Ascending aorta (tissue), 2 donors: ENCODE measurements at regions of chr21 and their contacts with region 1.

Region 1: DNA sequence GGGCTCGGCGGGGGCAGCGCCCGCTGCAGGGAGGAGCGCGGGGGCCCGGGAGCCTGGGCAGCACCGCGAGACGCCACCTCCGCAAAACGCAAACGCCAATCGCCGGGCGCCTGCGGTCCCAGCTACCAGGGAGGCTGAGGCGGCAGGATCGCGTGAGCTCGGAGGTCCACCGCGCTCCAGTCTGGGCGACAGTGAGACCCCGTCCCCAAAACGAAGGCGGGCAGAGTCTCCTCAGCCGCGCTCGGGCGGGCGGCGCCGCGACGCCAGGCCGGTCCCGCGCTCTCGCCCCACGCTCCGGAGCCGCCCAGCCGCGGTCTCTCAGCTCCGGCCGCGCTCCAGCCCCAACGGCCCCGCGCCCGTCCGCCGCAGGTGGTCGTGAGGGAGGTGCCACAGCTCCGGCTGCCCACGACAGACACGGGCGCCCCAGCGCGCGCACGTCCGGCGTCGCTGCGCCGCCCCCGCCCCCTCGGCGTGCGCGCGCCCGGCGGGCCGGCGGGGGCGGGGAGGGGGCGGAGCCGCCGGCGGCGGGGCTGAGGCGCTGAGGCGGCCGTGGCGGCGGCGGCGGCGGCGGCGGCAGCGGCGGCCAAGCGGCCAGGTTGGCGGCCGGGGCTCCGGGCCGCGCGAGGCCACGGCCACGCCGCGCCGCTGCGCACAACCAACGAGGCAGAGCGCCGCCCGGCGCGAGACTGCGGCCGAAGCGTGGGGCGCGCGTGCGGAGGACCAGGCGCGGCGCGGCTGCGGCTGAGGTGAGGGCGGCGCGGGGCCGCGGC is at the start of gene ADARB1:
- DNase-seq: peak in 1 of 2 donors; percentile 74
- H3K4me3 ChIP-seq: peak within 1 kb of the TSS; percentile 81 to 98
- H3K27ac ChIP-seq: peak within 1 kb of the TSS; percentile 91
- H3K4me1 ChIP-seq: peaks cover 1 to 21% of the 10 kb centered on the region in 2 donors
- H3K27me3 ChIP-seq: no peaks in the 10 kb centered on the region
- CTCF ChIP-seq: no peak
- total RNA-seq, gene ADARB1: 82.9 TPM

Region 2: DNA sequence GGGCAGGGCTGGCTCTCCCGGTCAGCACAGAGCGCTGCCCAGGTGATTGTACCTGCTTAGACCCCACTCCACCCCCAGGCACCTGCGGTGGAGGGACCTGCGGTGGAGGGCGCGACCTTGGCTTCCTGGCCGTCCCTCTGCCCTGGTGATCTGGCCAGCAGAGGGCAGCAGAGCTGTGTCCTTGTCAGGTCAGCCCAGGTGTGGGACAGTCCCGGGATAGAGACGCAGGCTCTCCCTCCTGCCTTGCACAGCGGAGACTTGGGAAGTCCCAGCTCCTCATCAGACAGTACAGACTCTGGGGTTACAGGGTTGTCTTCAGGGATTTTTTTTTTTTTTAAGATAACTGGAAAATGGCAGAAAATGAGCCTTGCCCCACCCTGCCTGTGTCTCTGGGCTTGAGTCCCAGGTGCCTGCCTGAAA is 124.4 kb before region 1 on chr21:
- intact Hi-C with region 1: loop called (anchors 1 kb)
- DNase-seq: peak; percentile 50 to 94
- H3K4me3 ChIP-seq: peak overlapping the region in 1 of 2 donors; percentile 10
- H3K27ac ChIP-seq: peak overlapping the region; percentile 82 to 96
- H3K4me1 ChIP-seq: peaks cover 23 to 40% of the 10 kb centered on the region in 2 donors
- H3K27me3 ChIP-seq: no peaks in the 10 kb centered on the region
- CTCF ChIP-seq: peak; percentile 96 to 98 (median 97)

Region 3: GRCh38 chr21:45000977-45001728 is 73.1 kb before region 1 on chr21:
- intact Hi-C with region 1: loop called (anchors 5 kb)
- DNase-seq: peak; percentile 37 to 93
- H3K4me3 ChIP-seq: peak overlapping the region in 1 of 2 donors; percentile 48
- H3K27ac ChIP-seq: peak overlapping the region; percentile 86 to 91
- H3K4me1 ChIP-seq: peaks cover 17 to 42% of the 10 kb centered on the region in 2 donors
- H3K27me3 ChIP-seq: no peaks in the 10 kb centered on the region
- CTCF ChIP-seq: peak in 2 of 3 experiments; percentile 4 to 9

Region 4: GRCh38 chr21:45104560-45104959 is 30.3 kb after region 1 on chr21:
- intact Hi-C with region 1: loop called (anchors 2 kb)
- DNase-seq: no peak
- H3K4me3 ChIP-seq: no peak overlapping the region
- H3K27ac ChIP-seq: peak overlapping the region; percentile 13 to 65
- H3K4me1 ChIP-seq: peaks cover 10 to 60% of the 10 kb centered on the region in 2 donors
- H3K27me3 ChIP-seq: no peaks in the 10 kb centered on the region
- CTCF ChIP-seq: no peak